ENCODE measurements at regions of chr6 and their contacts with region 1.

Region 1: DNA sequence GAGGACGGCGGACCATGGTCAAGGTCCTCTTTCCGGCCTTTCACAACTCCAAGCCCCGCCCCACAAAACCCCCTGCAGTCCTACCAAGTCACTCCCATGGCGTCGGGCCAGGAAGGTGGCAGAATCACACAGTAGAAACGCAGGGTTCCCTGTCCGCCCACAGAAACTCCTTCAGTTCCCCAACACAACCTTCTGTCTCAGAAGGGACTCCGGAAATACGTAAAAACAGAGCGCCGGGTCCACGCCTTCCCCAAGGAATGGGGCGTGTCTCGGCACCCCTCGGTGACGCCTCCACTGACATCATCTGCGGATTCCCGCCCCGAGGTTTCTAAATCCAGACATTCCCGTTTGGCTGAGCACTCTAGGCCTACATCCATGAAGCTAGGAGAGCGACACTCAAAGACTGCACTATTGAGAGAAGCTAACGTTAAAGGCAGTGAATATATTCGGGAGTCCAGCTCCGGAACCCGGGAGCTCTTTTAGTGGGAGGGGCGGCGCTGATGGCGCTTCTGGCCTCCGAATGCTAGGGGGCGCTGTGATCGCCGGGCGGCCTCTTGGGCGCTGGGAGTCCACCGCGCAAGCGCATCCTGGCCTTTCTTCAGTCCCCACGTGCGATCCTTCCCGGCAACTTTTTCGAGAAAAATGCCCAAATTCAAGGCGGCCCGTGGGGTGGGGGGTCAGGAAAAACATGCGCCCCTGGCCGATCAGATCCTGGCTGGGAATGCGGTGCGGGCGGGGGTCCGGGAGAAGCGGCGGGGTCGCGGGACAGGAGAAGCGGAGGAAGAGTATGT is at the starts of genes BYSL and MED20:
- DNase-seq: peak; percentile 93 to 94
- H3K4me3 ChIP-seq: peak within 1 kb of the TSS; percentile 85
- H3K4me1 ChIP-seq: peaks cover 13% of the 10 kb centered on the region; the same call in 1 of the 2 replicates
- H3K27me3 ChIP-seq: no peaks in the 10 kb centered on the region

Region 2: DNA sequence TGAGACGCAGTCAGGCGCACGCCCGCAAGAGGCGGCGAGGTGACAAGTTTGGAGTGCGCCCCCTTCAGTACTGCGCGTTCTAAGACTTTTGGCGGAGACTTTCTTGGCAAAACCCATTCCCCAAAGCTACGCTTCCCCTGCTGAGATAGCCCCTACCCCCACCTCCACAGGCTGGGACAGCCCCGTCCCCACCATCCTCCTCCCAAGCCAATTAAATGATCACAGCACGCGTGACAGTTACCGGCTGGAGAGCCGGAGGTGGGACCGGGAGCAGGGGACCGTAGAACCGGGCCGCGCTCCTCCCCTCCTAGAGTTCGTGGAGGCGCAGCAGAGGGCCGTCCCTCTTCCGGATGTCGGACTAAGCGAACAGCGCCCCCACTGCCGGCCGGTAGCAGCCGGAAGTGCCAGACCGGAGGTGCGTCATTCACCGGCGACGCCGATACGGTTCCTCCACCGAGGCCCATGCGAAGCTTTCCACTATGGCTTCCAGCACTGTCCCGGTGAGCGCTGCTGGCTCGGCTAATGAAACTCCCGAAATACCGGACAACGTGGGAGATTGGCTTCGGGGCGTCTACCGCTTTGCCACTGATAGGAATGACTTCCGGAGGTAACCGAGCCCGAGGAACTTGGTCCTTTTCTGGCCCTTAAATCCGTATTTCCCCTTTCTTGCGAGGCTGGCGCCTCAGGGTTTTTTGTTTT is 133.7 kb before region 1 on chr6 and contains the start of gene TOMM6:
- in situ Hi-C with region 1: loop called (anchors 5 kb)
- DNase-seq: peak; percentile 80 to 96
- H3K4me3 ChIP-seq: peak within 1 kb of the TSS; percentile 94
- H3K4me1 ChIP-seq: peaks cover 3% of the 10 kb centered on the region
- H3K27me3 ChIP-seq: no peaks in the 10 kb centered on the region

Region 3: DNA sequence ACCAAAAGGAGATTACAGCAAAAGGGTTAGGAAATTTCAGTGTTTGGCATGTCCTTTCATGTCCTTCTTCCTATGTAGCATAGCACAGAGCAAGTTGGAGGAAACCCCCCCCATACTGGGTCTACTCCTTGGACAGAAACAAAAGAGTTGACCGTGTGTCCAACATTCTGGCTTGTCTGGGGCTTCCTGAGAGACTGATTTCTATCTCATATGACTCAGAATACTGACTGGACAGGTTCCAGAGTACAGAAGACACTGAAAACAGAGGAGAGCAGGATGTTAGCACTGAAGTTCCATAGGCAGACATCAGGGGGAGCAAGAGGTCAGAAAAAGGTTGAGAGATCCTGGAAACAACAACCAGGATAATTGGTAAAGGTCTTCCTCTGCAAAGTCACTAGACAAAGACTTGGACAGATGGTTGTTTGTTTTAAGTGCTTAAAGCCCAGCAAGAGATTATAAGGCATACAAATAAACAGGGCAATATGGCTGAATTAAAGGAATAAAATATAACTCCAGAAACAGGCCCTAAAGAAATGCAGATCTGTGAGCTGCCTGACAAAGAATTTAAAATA is 74.4 kb before region 1 on chr6:
- in situ Hi-C with region 1: loop called (anchors 5 kb)
- DNase-seq: peak; percentile 82 to 84
- H3K4me3 ChIP-seq: no peak overlapping the region
- H3K4me1 ChIP-seq: no peaks in the 10 kb centered on the region
- H3K27me3 ChIP-seq: no peaks in the 10 kb centered on the region

Measured in HAP-1 (cell line).